Activated CD4-positive, alpha-beta T cell treated with anti-CD3 and anti-CD28 coated beads, Interleukin-2, amount 10 ng/mL, durations not matched to agents 24 days and 14 days (primary cell): ENCODE measurements at regions of chr21 and their contacts with region 1.

Region 1: DNA sequence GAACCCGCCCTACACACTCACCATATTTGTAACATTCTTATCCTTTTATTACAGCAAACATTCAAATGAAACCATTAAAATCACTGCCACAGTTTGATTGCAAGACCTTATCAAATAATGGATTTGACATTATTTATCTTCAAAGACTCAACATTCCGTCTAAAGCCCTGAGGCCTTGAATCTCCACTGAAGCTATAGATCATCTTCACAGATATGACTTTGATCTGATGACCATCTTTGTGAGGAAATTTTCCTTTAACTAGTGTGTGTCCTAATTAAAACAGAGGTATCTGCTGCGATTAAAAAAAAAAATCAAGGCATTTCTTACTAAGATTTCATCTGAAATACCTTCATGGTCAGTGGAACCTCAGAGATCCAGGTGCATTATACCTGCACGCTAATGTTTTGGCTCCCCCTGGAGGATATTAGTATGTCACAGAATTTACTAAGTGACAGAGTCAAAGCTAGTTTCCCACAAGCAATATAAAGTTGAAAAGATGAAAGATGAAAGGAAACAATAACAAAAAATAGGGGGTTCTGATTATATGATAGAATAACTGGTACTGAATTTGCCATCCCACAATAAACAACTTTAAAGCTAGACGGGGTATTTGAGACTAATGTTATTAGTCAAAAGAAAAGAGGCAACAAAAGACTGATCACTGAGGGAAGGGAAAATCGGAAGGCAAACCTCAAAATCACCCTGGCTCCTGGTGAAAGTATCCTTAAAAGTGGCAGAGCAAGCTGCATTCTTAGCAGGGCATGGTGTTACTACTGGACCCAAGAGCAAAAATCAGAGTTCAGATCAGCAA is 923.4 kb downstream of the NCAM2 start:
- DNase-seq: no peak
- H3K4me3 Mint-ChIP-seq: no peak overlapping the region
- H3K27ac Mint-ChIP-seq: no peak overlapping the region
- H3K4me1 Mint-ChIP-seq: no peaks in the 10 kb centered on the region
- H3K27me3 Mint-ChIP-seq: no peaks in the 10 kb centered on the region

Region 2: DNA sequence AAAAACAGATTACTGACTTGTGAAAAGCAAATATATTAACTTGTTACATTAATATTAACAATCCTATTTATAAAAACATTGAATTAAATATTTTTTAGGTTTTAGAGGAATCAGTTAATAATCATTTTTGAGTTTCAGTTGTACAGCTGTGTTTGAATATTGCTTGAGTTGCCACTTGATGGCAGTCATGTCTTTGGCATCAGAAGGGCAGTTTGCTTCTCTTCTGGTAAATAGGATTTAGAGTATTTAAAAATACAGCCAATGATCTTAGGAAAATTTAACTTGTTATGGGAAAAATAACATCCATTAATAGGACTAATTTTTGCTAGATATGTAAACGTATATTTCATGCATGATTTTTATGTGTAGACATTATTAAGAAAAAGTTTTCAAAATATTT is 689.3 kb before region 1 on chr21:
- intact Hi-C with region 1: loop called (anchors 5 kb)
- DNase-seq: no peak
- H3K4me3 Mint-ChIP-seq: no peak overlapping the region
- H3K27ac Mint-ChIP-seq: no peak overlapping the region
- H3K4me1 Mint-ChIP-seq: no peaks in the 10 kb centered on the region
- H3K27me3 Mint-ChIP-seq: peaks cover 3% of the 10 kb centered on the region

Region 3: DNA sequence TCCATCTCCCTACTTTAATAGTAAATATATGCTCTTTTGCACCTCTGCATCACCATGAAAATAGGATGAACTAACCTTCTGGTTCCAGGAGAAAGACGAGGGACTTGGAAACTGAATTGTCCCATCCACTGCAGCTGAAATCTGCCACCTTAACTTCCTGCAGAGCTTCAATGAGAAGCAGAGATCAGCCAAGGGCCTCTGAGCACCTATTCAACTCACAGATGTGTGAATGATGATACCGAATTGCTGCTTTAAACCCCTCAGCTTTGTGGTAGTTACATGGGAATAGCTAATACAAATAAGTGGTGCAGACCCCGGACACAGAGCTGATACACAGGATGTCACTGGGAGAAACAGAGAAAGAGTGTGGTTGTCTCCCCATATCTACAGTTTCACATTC is 306.7 kb before region 1 on chr21:
- intact Hi-C with region 1: no loop called
- DNase-seq: no peak
- H3K4me3 Mint-ChIP-seq: no peak overlapping the region
- H3K27ac Mint-ChIP-seq: no peak overlapping the region
- H3K4me1 Mint-ChIP-seq: no peaks in the 10 kb centered on the region
- H3K27me3 Mint-ChIP-seq: no peaks in the 10 kb centered on the region

Region 4: DNA sequence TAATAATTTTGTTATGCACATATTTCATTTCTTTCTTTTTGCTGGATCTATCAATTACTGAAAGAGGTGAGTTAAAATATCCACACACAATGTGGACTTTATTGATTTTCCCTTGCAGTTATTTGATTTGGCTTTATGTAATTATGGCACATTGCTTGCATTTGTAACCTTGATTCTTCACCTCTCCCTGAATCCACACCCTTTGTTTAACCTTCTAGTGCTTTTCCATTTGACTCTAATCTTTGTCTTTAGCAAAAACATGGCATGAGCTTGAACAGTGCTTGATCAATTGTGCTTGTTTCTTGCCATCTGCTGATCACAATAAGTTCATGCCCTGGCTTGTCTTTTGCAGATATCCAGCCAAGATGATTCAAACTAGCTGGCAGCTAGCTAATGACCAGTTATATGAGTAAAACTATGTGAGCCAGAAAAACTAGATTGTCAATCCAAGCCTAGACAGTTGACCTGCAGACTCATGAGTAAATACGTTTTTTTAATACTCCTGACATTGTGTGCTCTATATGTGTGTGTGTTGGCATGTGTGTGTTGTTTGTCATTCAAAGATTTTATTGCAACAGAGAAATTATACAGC is 24.3 kb before region 1 on chr21:
- intact Hi-C with region 1: no loop called
- DNase-seq: no peak
- H3K4me3 Mint-ChIP-seq: no peak overlapping the region
- H3K27ac Mint-ChIP-seq: no peak overlapping the region
- H3K4me1 Mint-ChIP-seq: no peaks in the 10 kb centered on the region
- H3K27me3 Mint-ChIP-seq: no peaks in the 10 kb centered on the region

Region 5: GRCh38 chr21:22132358-22133071 is 210.9 kb after region 1 on chr21:
- intact Hi-C with region 1: no loop called
- DNase-seq: no peak
- H3K4me3 Mint-ChIP-seq: no peak overlapping the region
- H3K27ac Mint-ChIP-seq: no peak overlapping the region
- H3K4me1 Mint-ChIP-seq: no peaks in the 10 kb centered on the region
- H3K27me3 Mint-ChIP-seq: no peaks in the 10 kb centered on the region

Region 6: GRCh38 chr21:22399738-22400514 is 478.3 kb after region 1 on chr21:
- intact Hi-C with region 1: no loop called
- DNase-seq: no peak
- H3K4me3 Mint-ChIP-seq: no peak overlapping the region
- H3K27ac Mint-ChIP-seq: no peak overlapping the region
- H3K4me1 Mint-ChIP-seq: no peaks in the 10 kb centered on the region
- H3K27me3 Mint-ChIP-seq: no peaks in the 10 kb centered on the region